CD4-positive, alpha-beta memory T cell (primary cell): ENCODE measurements at regions of chr3 and their contacts with region 1.

Region 1: DNA sequence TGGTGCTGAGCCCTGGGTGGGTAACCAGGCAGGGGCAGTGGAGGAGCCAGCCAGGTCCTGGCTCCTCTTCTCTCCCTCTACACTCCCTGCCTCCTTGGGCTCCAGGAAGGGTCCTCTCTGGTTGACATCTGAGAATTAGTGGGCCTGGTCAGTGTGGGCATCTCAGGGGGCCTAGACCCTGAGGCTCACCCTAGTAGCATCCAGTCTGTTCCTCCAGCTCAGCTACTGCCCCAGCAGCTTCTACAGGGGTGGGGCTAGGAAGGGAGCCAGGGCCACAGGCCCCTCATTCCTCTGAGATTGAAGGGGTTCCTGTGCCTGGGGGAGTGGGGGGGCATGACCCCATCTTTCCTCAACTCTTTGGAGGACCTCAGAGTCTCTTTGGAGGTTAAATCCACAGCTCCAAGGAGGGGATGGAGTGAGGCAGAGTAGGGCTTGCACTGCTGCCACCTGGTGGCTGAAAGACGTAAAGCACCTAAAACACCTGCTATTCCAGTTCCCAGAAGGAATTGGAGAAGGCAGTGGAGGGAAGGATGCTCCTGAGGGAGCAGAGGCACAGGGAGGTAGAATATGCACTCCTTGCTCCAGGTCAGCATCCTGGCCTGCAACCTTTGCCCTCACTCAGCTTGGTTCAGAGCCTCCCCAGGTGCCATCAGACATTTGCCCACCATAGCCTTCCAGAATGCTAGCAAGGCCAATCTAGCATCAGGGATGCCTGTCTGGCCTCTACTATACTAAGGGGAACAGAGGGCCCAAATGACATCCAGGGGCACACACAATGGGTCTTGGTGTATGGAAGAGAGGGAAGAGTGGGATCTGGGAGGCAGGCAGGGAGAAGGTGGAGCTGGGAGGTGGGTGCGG is 25.1 kb downstream of the C3orf18 start:
- DNase-seq: peak; percentile 48 to 65 (median 52)
- H3K4me3 ChIP-seq: no peak overlapping the region
- H3K4me3 Mint-ChIP-seq: peak overlapping the region in 1 of 8 donors; percentile 15
- H3K27ac ChIP-seq: no peak overlapping the region
- H3K27ac Mint-ChIP-seq: no peak overlapping the region
- H3K4me1 ChIP-seq: no peaks in the 10 kb centered on the region
- H3K4me1 Mint-ChIP-seq: no peaks in the 10 kb centered on the region
- H3K27me3 ChIP-seq: no peaks in the 10 kb centered on the region
- H3K27me3 Mint-ChIP-seq: peaks cover 3% of the 10 kb centered on the region in 2 donors

Region 2: DNA sequence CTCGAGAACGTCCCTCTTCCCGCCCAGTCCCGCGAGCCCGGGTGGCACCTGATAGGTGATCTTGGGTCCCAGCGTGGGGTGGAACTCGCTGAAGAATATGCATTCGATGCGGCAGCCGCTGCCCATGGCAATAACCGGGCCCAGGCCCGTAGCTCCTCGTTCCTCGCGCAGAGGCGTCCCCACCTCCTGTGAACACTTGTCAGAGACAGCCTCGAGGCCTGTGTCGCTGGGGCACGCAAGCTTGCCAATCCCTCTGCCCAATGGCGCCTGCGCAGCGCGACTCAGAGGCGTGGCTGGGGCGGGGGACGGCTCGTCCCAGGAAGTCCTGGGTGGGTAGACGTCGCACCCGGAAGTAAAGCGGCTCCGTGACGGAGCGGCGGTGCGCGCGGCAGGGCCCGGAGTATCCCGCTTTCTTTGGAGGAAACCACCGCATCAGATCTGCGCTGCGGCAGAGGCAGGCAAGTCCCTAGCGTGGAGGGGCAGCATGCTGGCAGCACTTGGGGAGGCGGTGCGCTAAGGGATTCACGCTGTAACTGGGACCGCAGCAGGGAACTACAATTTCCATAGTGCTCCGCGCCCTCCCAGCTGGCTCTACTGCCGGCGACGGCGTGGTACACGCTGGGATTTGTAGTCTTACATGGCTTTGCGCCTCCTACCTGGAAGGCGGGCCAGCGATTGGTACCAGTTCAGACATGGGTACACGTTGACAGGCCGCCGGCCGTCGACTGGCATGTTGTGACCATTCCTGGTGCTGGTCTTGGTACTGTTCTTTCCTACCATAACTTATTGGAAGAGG is 191.7 kb before region 1 on chr3 and contains the starts of genes CYB561D2 and NPRL2:
- CTCF ChIA-PET with region 1: interaction called, 46 read pairs
- POLR2A ChIA-PET with region 1: interaction called, 7 read pairs
- intact Hi-C with region 1: loop called (anchors 1 kb)
- DNase-seq: peak; percentile 99 to 100 (median 99)
- H3K4me3 ChIP-seq: peak within 1 kb of the TSS; percentile 66 to 98
- H3K4me3 Mint-ChIP-seq: peak within 1 kb of the TSS; percentile 91 to 99 (median 96)
- H3K27ac ChIP-seq: peak within 1 kb of the TSS; percentile 94
- H3K27ac Mint-ChIP-seq: peak within 1 kb of the TSS; percentile 96 to 99 (median 99)
- H3K4me1 ChIP-seq: peaks cover 58% of the 10 kb centered on the region
- H3K4me1 Mint-ChIP-seq: peaks cover 28 to 78% (median 53%) of the 10 kb centered on the region in 4 donors
- H3K27me3 ChIP-seq: no peaks in the 10 kb centered on the region
- H3K27me3 Mint-ChIP-seq: no peaks in the 10 kb centered on the region
- total RNA-seq, gene CYB561D2: 39.6 to 40.0 TPM
- total RNA-seq, gene NPRL2: 50.0 to 53.0 TPM

Region 3: GRCh38 chr3:50365080-50365841 is 177.1 kb before region 1 on chr3:
- CTCF ChIA-PET with region 1: interaction called, 11 read pairs
- POLR2A ChIA-PET with region 1: no interaction called
- intact Hi-C with region 1: no loop called
- DNase-seq: peak; percentile 92 to 97 (median 95)
- H3K4me3 ChIP-seq: peak overlapping the region; percentile 73 to 100
- H3K4me3 Mint-ChIP-seq: peak overlapping the region; percentile 86 to 94 (median 90)
- H3K27ac ChIP-seq: peak overlapping the region; percentile 87
- H3K27ac Mint-ChIP-seq: peak overlapping the region; percentile 91 to 97 (median 95)
- H3K4me1 ChIP-seq: peaks cover 30% of the 10 kb centered on the region
- H3K4me1 Mint-ChIP-seq: peaks cover 4 to 35% (median 18%) of the 10 kb centered on the region in 4 donors
- H3K27me3 ChIP-seq: no peaks in the 10 kb centered on the region
- H3K27me3 Mint-ChIP-seq: peaks cover 0 to 1% of the 10 kb centered on the region in 2 donors

Region 4: DNA sequence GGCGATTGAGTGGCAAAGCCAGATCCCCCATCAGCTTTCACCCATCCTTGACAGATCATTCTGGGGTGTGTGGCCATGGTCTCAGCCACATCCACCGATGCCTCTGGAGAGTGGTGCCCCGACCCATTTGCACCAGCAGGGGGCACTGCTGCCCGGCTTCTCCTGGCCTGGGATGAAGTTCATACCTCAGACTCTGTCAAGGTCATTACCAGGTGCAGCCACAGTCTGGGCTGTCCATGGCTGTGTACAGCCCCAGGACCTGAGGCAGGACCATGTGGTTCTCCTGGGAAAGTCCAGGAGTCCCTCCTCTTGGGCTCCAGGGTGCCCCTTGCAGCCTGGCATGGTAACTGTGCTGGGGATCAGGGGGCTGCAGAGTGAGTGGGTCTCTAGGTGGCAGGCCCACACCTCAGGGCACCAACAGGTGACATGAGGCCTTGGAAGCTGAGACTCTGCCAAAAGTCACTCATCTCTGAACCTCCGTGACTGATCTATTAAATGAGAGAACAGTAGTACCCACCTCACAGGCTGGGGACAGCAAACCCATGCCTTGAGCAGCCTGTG is 106.2 kb before region 1 on chr3:
- CTCF ChIA-PET with region 1: interaction called, 41 read pairs
- POLR2A ChIA-PET with region 1: interaction called, 4 read pairs
- intact Hi-C with region 1: no loop called
- DNase-seq: peak; percentile 63 to 74 (median 66)
- H3K4me3 ChIP-seq: no peak overlapping the region
- H3K4me3 Mint-ChIP-seq: no peak overlapping the region
- H3K27ac ChIP-seq: no peak overlapping the region
- H3K27ac Mint-ChIP-seq: peak overlapping the region in 1 of 7 donors; percentile 14
- H3K4me1 ChIP-seq: no peaks in the 10 kb centered on the region
- H3K4me1 Mint-ChIP-seq: peaks cover 0 to 6% (median 2%) of the 10 kb centered on the region in 4 donors
- H3K27me3 ChIP-seq: no peaks in the 10 kb centered on the region
- H3K27me3 Mint-ChIP-seq: peaks cover 0 to 3% of the 10 kb centered on the region in 2 donors

Region 5: DNA sequence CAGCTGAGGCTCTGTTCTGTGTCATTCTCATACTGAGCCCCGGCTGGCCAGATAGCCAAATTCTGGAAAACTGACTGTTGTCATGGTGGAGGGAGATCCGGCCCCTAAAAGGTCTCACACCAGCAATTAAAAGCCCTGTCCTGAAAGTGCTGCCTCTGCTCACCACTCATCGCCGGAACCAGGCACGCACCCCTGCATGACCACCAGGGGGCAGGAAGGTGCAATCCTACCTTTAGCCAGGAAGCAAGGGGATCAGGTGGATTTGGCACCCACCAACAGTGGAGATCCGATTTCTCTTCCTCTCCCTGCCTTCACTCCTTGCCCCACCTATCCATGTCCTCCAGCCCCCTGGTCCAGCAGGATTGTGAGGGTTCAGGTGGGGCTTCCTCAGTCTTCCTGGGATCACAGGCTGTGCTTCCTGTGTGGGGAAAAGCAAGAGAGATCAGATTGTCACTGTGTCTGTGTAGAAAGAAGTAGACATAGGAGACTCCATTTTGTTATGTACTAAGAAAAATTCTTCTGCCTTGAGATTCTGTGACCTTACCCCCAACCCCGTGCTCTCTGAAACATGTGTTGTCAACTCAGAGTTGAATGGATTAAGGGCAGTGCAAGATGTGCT is 22.8 kb before region 1 on chr3:
- CTCF ChIA-PET with region 1: interaction called, 12 read pairs
- POLR2A ChIA-PET with region 1: interaction called, 3 read pairs
- intact Hi-C with region 1: no loop called
- DNase-seq: peak; percentile 58 to 68 (median 66)
- H3K4me3 ChIP-seq: no peak overlapping the region
- H3K4me3 Mint-ChIP-seq: no peak overlapping the region
- H3K27ac ChIP-seq: no peak overlapping the region
- H3K27ac Mint-ChIP-seq: peak overlapping the region in 1 of 7 donors; percentile 17
- H3K4me1 ChIP-seq: peaks cover 4% of the 10 kb centered on the region
- H3K4me1 Mint-ChIP-seq: peaks cover 3 to 10% (median 5%) of the 10 kb centered on the region in 4 donors
- H3K27me3 ChIP-seq: no peaks in the 10 kb centered on the region
- H3K27me3 Mint-ChIP-seq: peaks cover 0 to 5% of the 10 kb centered on the region in 2 donors